PC-3 (cell line): ENCODE measurements at regions of chr2 and their contacts with region 1.

Region 1: DNA sequence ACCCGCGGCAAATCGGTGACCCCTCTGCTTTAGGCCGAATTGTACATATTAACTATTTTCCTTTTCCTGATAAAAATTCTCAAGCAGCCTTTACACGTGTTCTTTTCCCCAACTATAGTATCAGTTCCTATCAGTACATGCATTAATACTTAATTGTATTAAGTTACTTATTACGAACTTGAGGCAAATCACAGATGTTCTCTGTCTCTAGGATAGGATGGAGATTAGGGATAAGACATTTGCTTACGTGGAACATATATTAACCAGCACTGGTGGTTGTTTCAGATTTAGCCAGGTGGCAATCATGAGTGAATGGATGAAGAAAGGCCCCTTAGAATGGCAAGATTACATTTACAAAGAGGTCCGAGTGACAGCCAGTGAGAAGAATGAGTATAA is 675 bp downstream of the GEMIN6 start:
- DNase-seq: no peak
- ATAC-seq: no peak
- H3K4me3 ChIP-seq: peak overlapping the region; percentile 87
- H3K27ac ChIP-seq: no peak overlapping the region
- H3K4me1 ChIP-seq: peaks cover 9% of the 10 kb centered on the region; the same call in 1 of the 2 replicates
- H3K27me3 ChIP-seq: no peaks in the 10 kb centered on the region
- CTCF ChIP-seq: no peak

Region 2: GRCh38 chr2:38740851-38741731 is 37.6 kb before region 1 on chr2:
- CTCF ChIA-PET with region 1: interaction called, 4 read pairs
- POLR2A ChIA-PET with region 1: no interaction called
- intact Hi-C with region 1: loop called (anchors 5 kb)
- DNase-seq: peak; percentile 72
- ATAC-seq: peak; percentile 60
- H3K4me3 ChIP-seq: no peak overlapping the region
- H3K27ac ChIP-seq: no peak overlapping the region
- H3K4me1 ChIP-seq: no peaks in the 10 kb centered on the region
- H3K27me3 ChIP-seq: no peaks in the 10 kb centered on the region
- CTCF ChIP-seq: peak; percentile 64

Region 3: GRCh38 chr2:38806015-38806732 is 27.5 kb after region 1 on chr2:
- CTCF ChIA-PET with region 1: no interaction called
- POLR2A ChIA-PET with region 1: no interaction called
- intact Hi-C with region 1: loop called (anchors 1 kb)
- DNase-seq: no peak
- ATAC-seq: no peak
- H3K4me3 ChIP-seq: no peak overlapping the region
- H3K27ac ChIP-seq: no peak overlapping the region
- H3K4me1 ChIP-seq: no peaks in the 10 kb centered on the region
- H3K27me3 ChIP-seq: no peaks in the 10 kb centered on the region
- CTCF ChIP-seq: no peak